Activated CD8-positive, alpha-beta T cell treated with anti-CD3 and anti-CD28 coated beads for 36 hours (primary cell): ENCODE measurements at regions of chr3 and their contacts with region 1.

Region 1: DNA sequence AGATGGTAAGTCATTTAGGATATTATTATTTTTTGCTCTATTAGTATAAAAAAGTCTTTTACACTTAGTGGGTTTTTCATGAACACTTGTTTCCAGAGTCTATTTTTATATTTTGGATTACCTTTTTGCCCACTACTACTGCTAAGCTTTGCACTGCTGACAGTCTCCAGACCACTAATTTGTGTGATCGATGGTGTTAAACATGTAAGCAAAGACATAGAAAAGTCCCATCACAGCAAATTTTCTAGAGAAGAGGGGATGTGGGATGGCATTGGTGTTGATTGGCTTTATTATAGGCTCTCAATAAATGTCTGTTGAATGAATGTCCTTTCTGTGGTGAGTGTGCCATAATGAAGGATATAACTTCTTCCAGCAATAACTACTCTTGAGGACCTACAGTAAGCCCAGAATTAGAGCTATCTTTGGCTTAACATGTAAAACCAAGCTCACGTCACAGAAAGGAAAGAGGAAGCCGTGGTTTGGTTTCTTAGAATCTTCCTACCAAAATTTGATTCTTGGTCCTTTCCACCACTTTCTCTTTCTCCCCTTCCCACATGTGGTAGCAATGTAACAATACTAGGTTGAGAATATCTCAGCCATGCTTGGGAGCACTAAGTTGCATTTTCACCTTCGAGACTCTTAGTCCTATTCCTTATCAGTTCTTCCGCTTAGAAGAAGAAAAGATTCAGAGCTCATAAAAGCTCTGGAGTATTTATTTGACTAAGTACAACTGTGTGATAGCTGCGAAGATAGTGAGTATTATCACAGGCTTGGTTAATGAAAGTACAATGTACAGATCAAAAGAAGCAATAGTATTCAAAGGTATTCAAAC is 90.6 kb upstream of the UMPS start:
- DNase-seq: peak; percentile 56
- ATAC-seq: peak; percentile 94
- H3K4me3 Mint-ChIP-seq: peak overlapping the region; percentile 34
- H3K27ac Mint-ChIP-seq: peak overlapping the region; percentile 79
- H3K4me1 Mint-ChIP-seq: peaks cover 36% of the 10 kb centered on the region
- H3K27me3 Mint-ChIP-seq: peaks cover 12% of the 10 kb centered on the region
- CTCF ChIP-seq: no peak

Region 2: DNA sequence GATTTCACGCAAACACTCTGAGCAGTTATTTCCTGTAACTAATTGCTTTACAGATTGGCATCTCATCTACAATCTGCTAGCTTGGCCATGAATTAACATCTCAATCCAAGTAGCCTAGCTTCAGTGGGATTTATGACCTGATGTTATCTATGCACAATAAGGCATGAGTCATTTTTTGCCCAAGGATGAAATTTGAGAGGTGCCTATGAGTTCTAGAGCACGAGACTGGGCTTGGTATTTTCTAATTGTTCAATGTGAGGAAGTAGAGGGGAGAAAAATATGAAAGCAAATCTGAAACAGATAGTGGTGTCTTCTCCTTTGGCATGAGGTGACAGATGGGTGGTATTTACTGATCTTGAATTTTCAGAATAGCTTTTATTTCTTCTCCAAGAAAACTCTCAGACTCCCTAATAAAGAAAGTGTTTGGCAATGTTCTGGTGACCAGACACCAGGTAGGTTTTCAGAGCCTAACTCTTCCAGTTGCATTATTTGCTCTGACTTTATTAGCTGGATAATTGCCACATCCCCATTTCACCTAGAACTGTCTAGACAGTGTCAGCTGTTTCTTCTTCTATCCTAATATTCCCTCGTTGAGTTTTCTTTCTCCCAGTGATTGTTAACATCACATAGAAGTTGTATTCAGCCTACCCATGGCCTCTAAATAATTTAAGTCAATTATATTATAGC is 210.3 kb before region 1 on chr3:
- CTCF ChIA-PET with region 1: no interaction called
- POLR2A ChIA-PET with region 1: no interaction called
- intact Hi-C with region 1: no loop called
- DNase-seq: no peak
- ATAC-seq: no peak
- H3K4me3 Mint-ChIP-seq: no peak overlapping the region
- H3K27ac Mint-ChIP-seq: no peak overlapping the region
- H3K4me1 Mint-ChIP-seq: no peaks in the 10 kb centered on the region
- H3K27me3 Mint-ChIP-seq: peaks cover 2% of the 10 kb centered on the region
- CTCF ChIP-seq: no peak

Region 3: GRCh38 chr3:124650798-124651197 is 11.2 kb after region 1 on chr3:
- CTCF ChIA-PET with region 1: interaction called, 3 read pairs
- POLR2A ChIA-PET with region 1: interaction called, 10 read pairs
- intact Hi-C with region 1: no loop called
- DNase-seq: peak; percentile 78
- ATAC-seq: peak; percentile 69
- H3K4me3 Mint-ChIP-seq: no peak overlapping the region
- H3K27ac Mint-ChIP-seq: peak overlapping the region; percentile 78
- H3K4me1 Mint-ChIP-seq: peaks cover 24% of the 10 kb centered on the region
- H3K27me3 Mint-ChIP-seq: peaks cover 7% of the 10 kb centered on the region
- CTCF ChIP-seq: no peak

Region 4: GRCh38 chr3:124695369-124695768 is 55.7 kb after region 1 on chr3:
- CTCF ChIA-PET with region 1: no interaction called
- POLR2A ChIA-PET with region 1: no interaction called
- intact Hi-C with region 1: no loop called
- DNase-seq: no peak
- ATAC-seq: no peak
- H3K4me3 Mint-ChIP-seq: no peak overlapping the region
- H3K27ac Mint-ChIP-seq: no peak overlapping the region
- H3K4me1 Mint-ChIP-seq: no peaks in the 10 kb centered on the region
- H3K27me3 Mint-ChIP-seq: peaks cover 12% of the 10 kb centered on the region
- CTCF ChIP-seq: no peak